ENCODE measurements at regions of chr21 and their contacts with region 1.

Region 1: GRCh38 chr21:31180256-31181081 is 142.2 kb upstream of the KRTAP19-8 start:
- DNase-seq: no peak
- H3K4me3 Mint-ChIP-seq: peak overlapping the region; percentile 74
- H3K27ac Mint-ChIP-seq: peak overlapping the region; percentile 100
- H3K4me1 Mint-ChIP-seq: peaks cover 74% of the 10 kb centered on the region
- H3K27me3 Mint-ChIP-seq: no peaks in the 10 kb centered on the region

Region 2: GRCh38 chr21:31107871-31108270 is 72.6 kb before region 1 on chr21:
- CTCF ChIA-PET with region 1: interaction called, 7 read pairs
- POLR2A ChIA-PET with region 1: interaction called, 4 read pairs
- intact Hi-C with region 1: loop called (anchors 2 kb)
- DNase-seq: no peak
- H3K4me3 Mint-ChIP-seq: no peak overlapping the region
- H3K27ac Mint-ChIP-seq: no peak overlapping the region
- H3K4me1 Mint-ChIP-seq: peaks cover 32% of the 10 kb centered on the region
- H3K27me3 Mint-ChIP-seq: no peaks in the 10 kb centered on the region

Region 3: GRCh38 chr21:31161157-31161556 is 19.3 kb before region 1 on chr21:
- CTCF ChIA-PET with region 1: interaction called, 16 read pairs
- POLR2A ChIA-PET with region 1: interaction called, 11 read pairs
- intact Hi-C with region 1: loop called (anchors 1 kb)
- DNase-seq: peak; percentile 58
- H3K4me3 Mint-ChIP-seq: peak overlapping the region; percentile 53
- H3K27ac Mint-ChIP-seq: peak overlapping the region; percentile 77
- H3K4me1 Mint-ChIP-seq: peaks cover 84% of the 10 kb centered on the region
- H3K27me3 Mint-ChIP-seq: no peaks in the 10 kb centered on the region

Region 4: DNA sequence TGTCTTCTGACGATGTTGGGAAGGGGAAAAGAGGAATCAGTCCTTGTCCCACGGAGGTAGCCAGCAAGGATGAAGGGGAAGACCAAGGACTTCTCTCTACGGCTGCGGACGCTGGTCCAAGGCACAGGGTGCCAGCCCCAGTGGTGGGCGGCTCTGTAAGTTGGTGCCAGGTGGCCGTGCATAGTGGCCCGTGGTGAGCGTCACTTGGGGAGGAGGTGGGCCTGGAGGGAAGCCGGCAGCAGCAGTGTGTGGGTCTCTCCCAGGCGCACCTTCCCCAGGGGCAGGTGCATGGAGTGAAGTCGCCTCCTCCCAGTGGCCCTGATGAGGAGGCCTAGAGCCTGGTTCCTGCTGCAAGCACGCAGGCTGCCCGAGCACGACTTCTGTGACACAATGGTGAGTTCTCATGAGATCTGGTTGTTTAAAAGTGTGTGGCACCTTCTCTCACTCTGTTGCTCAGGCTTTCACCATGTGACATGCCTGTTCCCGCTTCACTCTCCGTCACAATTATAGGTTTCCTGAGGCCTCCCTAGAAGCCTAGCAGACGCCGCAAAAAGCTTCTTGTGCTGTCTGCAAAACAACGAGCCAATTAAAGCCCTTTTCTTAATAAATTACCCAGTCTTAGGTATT is 207.2 kb after region 1 on chr21:
- CTCF ChIA-PET with region 1: no interaction called
- POLR2A ChIA-PET with region 1: no interaction called
- intact Hi-C with region 1: no loop called
- DNase-seq: no peak
- H3K4me3 Mint-ChIP-seq: no peak overlapping the region
- H3K27ac Mint-ChIP-seq: no peak overlapping the region
- H3K4me1 Mint-ChIP-seq: no peaks in the 10 kb centered on the region
- H3K27me3 Mint-ChIP-seq: no peaks in the 10 kb centered on the region

Region 5: GRCh38 chr21:31509194-31510017 is 328.9 kb after region 1 on chr21:
- CTCF ChIA-PET with region 1: no interaction called
- POLR2A ChIA-PET with region 1: no interaction called
- intact Hi-C with region 1: loop called (anchors 5 kb)
- DNase-seq: peak; percentile 92
- H3K4me3 Mint-ChIP-seq: peak overlapping the region; percentile 44
- H3K27ac Mint-ChIP-seq: peak overlapping the region; percentile 60
- H3K4me1 Mint-ChIP-seq: peaks cover 24% of the 10 kb centered on the region
- H3K27me3 Mint-ChIP-seq: no peaks in the 10 kb centered on the region

Region 6: GRCh38 chr21:31659536-31660258 is 479.2 kb after region 1 on chr21 and contains the start of gene SOD1:
- CTCF ChIA-PET with region 1: no interaction called
- POLR2A ChIA-PET with region 1: no interaction called
- intact Hi-C with region 1: loop called (anchors 5 kb)
- DNase-seq: peak; percentile 96
- H3K4me3 Mint-ChIP-seq: peak within 1 kb of the TSS; percentile 98
- H3K27ac Mint-ChIP-seq: peak within 1 kb of the TSS; percentile 99
- H3K4me1 Mint-ChIP-seq: peaks cover 65% of the 10 kb centered on the region
- H3K27me3 Mint-ChIP-seq: no peaks in the 10 kb centered on the region
- total RNA-seq, gene SOD1: 280 to 286 TPM